B cell (primary cell): ENCODE measurements at regions of chr1 and their contacts with region 1.

Region 1: DNA sequence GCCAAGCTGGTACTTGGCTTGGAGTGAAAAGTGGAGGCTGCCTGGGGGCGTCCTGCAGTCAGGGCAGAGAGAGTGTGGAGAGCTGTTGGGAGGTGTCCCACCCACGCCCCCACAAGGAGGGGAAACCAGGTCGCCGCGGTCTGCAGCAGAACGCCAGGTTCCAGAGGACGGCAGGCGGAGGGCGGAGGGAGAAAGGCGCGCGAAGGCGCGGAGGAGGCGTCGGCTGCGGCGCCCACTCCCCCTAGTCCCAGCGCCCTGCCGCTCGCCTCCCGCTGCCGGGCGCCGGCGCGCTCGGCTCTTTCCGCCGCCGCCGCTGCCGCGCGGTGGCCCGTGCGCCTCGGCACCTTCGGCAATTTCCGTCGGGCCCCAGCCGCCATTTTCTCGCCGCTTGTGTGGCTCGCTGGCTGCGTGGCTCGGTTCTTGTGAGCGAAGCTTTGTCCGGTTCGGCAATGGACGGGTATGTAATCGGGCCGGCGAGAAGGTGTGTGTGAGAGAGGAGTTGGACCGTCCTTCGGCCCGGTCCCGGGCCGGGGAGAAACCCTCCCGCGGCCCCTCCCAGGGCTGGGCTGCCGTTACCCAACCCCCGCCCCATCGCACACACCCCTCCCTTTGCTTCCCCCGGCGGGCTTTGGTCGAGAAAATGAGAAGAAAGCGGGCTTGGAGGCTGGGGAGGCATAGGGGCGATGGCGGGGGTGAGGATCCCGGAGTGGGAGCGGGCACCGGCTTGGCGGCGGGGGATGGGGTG is at the start of gene PTBP2:
- DNase-seq: peak; percentile 91
- ATAC-seq: peak; percentile 88
- H3K4me3 ChIP-seq: peak within 1 kb of the TSS; percentile 85 to 96 (median 89)
- H3K4me3 Mint-ChIP-seq: peak within 1 kb of the TSS; percentile 97
- H3K27ac ChIP-seq: peak within 1 kb of the TSS; percentile 93 to 94
- H3K27ac Mint-ChIP-seq: peak within 1 kb of the TSS; percentile 99
- H3K4me1 ChIP-seq: peaks cover 13 to 18% of the 10 kb centered on the region in 2 donors
- H3K4me1 Mint-ChIP-seq: peaks cover 28% of the 10 kb centered on the region
- H3K27me3 ChIP-seq: no peaks in the 10 kb centered on the region
- H3K27me3 Mint-ChIP-seq: no peaks in the 10 kb centered on the region
- CTCF ChIP-seq: no peak
- total RNA-seq, gene PTBP2: 30.5 and 33.6 TPM in 2 replicates

Region 2: DNA sequence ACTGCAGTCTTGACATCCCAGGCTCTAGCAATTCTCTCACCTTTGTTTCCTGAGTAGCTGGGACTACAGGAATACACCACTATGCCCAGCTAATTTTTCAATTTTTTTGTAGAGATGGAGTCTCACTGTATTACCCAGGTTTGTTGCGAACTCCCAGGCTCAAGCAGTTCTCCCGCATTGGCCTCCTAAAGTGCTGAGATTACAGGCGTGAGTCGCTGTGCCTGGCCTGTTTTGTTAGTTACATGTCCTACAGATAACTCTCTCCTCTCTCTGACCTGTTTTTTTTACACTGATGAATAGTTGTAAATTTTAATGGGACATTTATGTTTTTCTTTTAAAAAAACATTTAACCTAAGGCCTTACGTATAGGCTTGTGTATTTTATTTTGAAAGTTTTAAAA is 19.7 kb after region 1 on chr1:
- CTCF ChIA-PET with region 1: no interaction called
- POLR2A ChIA-PET with region 1: interaction called, 8 read pairs
- intact Hi-C with region 1: loop called (anchors 2 kb)
- DNase-seq: no peak
- ATAC-seq: no peak
- H3K4me3 ChIP-seq: no peak overlapping the region
- H3K4me3 Mint-ChIP-seq: no peak overlapping the region
- H3K27ac ChIP-seq: no peak overlapping the region
- H3K27ac Mint-ChIP-seq: no peak overlapping the region
- H3K4me1 ChIP-seq: peaks cover 0 to 2% of the 10 kb centered on the region in 2 donors
- H3K4me1 Mint-ChIP-seq: peaks cover 33% of the 10 kb centered on the region
- H3K27me3 ChIP-seq: no peaks in the 10 kb centered on the region
- H3K27me3 Mint-ChIP-seq: no peaks in the 10 kb centered on the region
- CTCF ChIP-seq: no peak

Region 3: DNA sequence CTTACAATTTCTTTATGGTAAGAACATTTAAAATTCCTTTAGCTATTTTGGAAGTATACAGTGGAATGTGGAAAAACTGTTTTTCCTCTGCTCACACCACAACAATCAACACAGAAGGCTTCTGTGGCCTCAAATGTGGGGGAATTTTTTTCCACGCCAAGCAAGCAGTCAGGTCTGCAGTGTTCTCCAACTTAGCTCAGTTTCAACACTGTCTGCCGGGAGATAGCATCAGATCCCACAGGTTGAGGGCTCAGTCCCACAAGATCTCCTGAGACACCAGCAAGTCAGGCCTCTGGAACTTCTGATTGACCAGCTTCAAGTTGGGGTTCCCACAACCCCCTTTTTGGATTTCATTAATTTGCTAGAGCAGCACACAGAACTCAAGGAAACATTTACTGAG is 50.3 kb after region 1 on chr1:
- CTCF ChIA-PET with region 1: no interaction called
- POLR2A ChIA-PET with region 1: no interaction called
- intact Hi-C with region 1: loop called (anchors 10 kb)
- DNase-seq: no peak
- ATAC-seq: no peak
- H3K4me3 ChIP-seq: no peak overlapping the region
- H3K4me3 Mint-ChIP-seq: no peak overlapping the region
- H3K27ac ChIP-seq: no peak overlapping the region
- H3K27ac Mint-ChIP-seq: no peak overlapping the region
- H3K4me1 ChIP-seq: no peaks in the 10 kb centered on the region
- H3K4me1 Mint-ChIP-seq: no peaks in the 10 kb centered on the region
- H3K27me3 ChIP-seq: no peaks in the 10 kb centered on the region
- H3K27me3 Mint-ChIP-seq: no peaks in the 10 kb centered on the region
- CTCF ChIP-seq: no peak